Gastrocnemius medialis (tissue), 4 donors: ENCODE measurements at regions of chrX and their contacts with region 1.

Region 1: GRCh38 chrX:54182864-54183608 is at the start of gene FAM120C:
- DNase-seq: peak; percentile 37 to 61
- ATAC-seq: peak; percentile 85 to 90
- H3K4me3 ChIP-seq: peak within 1 kb of the TSS; percentile 69 to 75 (median 72)
- H3K27ac ChIP-seq: peak within 1 kb of the TSS; percentile 84 to 93 (median 88)
- H3K4me1 ChIP-seq: peaks cover 28 to 32% of the 10 kb centered on the region in 2 donors
- H3K27me3 ChIP-seq: no peaks in the 10 kb centered on the region
- CTCF ChIP-seq: no peak
- POLR2A ChIP-seq: no peak
- total RNA-seq, gene FAM120C: 4.7 to 12.8 (median 10.9) TPM

Region 2: DNA sequence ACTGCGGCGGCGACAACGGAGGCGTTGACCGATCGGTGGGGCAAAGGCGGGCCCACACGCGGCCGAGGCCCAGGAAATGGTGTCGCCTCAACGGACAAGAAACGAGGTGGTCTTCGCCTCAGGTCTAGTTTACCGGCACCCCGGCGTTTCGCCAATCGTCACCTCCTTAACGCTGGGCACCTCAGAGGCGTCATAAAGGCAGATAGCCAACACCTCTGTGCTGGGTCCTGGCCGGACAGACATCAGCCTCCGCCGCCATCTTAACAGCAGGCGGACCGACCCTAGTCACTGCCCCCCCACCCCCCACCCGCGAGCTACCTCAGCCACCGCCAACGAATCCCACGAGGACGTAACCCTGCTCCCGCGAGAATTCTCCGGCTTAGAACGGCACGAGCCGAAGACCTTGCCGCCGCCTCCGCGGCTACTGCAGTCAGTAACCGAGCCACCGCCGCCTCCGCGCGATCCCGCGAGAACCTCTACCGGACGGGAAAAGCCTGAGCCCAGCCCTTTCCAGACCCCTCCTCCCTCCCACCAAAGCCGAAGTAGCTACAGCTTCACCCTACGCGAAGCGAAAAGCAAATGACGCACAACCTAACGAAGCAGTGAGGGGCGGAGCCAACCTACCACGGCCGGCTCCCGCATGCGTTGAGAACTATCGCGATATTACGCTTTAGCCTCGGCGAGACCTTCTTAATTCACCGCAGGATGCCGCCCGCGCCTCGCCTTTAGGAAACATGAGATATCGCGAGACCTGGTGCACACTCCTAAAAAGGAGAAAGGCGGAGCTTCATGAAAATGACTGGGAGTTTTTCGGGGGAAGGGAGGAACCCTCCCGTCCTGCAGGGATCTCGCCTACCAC is 499.3 kb before region 1 on chrX:
- in situ Hi-C with region 1: no loop called
- intact Hi-C with region 1: loop called (anchors 5 kb)
- DNase-seq: peak; percentile 91 to 95
- ATAC-seq: peak; percentile 84 to 86
- H3K4me3 ChIP-seq: peak overlapping the region; percentile 58 to 86 (median 60)
- H3K27ac ChIP-seq: peak overlapping the region; percentile 83 to 95 (median 90)
- H3K4me1 ChIP-seq: peaks cover 2 to 26% of the 10 kb centered on the region in 2 donors
- H3K27me3 ChIP-seq: no peaks in the 10 kb centered on the region
- CTCF ChIP-seq: no peak
- POLR2A ChIP-seq: peak; percentile 74 to 79

Region 3: DNA sequence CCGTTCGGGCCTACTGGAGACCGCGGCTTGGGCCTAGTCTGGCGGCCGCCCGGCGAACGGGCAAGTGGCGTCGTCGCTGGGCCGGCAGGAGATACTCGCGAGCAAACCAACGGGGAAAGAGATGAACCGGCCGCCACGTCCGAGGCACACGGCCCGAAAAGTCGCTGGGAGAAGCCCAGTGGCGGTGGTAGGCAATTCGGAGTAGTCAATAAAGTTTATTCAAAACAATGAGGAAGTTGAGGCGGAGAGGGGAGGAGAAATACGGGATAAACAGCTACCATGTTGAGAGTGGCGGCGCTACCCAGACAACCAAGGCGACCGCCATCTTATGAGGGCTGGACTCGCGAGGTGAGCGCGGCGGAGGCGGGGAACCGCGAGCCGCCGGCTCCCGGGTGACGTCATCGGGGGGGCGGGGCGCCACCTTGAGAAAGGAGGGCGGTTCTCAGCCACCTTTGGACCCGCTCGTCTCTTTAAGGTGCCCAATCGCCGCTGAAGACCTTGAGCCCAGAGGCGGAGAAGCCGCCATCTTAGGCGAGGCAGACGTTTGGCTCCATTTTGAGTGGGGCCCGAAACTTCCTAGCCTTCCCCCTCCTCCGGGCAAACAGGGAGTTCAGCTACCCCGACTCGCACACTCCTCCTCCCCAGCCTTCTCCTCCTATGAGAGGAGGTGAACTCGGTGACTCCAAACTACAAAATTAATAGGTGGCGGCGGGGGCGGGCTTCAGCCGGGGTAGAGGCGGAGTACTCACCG is 138.7 kb before region 1 on chrX and contains the start of gene PHF8:
- in situ Hi-C with region 1: loop called in 1 of 4 experiments (anchors 10 kb)
- intact Hi-C with region 1: loop called (anchors 2 kb)
- DNase-seq: peak; percentile 87 to 95
- ATAC-seq: peak; percentile 91 to 95
- H3K4me3 ChIP-seq: peak within 1 kb of the TSS; percentile 70 to 96 (median 78)
- H3K27ac ChIP-seq: peak within 1 kb of the TSS; percentile 90 to 96 (median 94)
- H3K4me1 ChIP-seq: no peaks in the 10 kb centered on the region
- H3K27me3 ChIP-seq: no peaks in the 10 kb centered on the region
- CTCF ChIP-seq: no peak
- POLR2A ChIP-seq: peak; percentile 60 to 67
- total RNA-seq, gene PHF8: 7.2 to 22.5 (median 13.9) TPM

Region 4: GRCh38 chrX:54439967-54440871 is 257.2 kb after region 1 on chrX and contains the start of gene TSR2:
- in situ Hi-C with region 1: no loop called
- intact Hi-C with region 1: loop called (anchors 5 kb)
- DNase-seq: peak; percentile 63 to 76
- ATAC-seq: peak; percentile 96 to 97
- H3K4me3 ChIP-seq: peak within 1 kb of the TSS; percentile 74 to 95 (median 90)
- H3K27ac ChIP-seq: peak within 1 kb of the TSS; percentile 61 to 77 (median 63)
- H3K4me1 ChIP-seq: peaks cover 6 to 14% of the 10 kb centered on the region in 2 donors
- H3K27me3 ChIP-seq: no peaks in the 10 kb centered on the region
- CTCF ChIP-seq: no peak
- POLR2A ChIP-seq: peak in 1 of 2 donors; percentile 49
- total RNA-seq, gene TSR2: 10.1 to 24.2 (median 18.0) TPM

Region 5: GRCh38 chrX:54529552-54530357 is 346.7 kb after region 1 on chrX and contains the start of gene GNL3L:
- in situ Hi-C with region 1: loop called in 2 of 4 experiments (anchors 25 kb)
- intact Hi-C with region 1: no loop called
- DNase-seq: peak; percentile 78 to 87
- ATAC-seq: peak; percentile 91 to 92
- H3K4me3 ChIP-seq: peak within 1 kb of the TSS; percentile 64 to 84 (median 76)
- H3K27ac ChIP-seq: peak within 1 kb of the TSS; percentile 80 to 91 (median 84)
- H3K4me1 ChIP-seq: peaks cover 4 to 12% of the 10 kb centered on the region in 2 donors
- H3K27me3 ChIP-seq: no peaks in the 10 kb centered on the region
- CTCF ChIP-seq: no peak
- POLR2A ChIP-seq: peak; percentile 38 to 50
- total RNA-seq, gene GNL3L: 21.2 to 41.7 (median 34.9) TPM

Region 6: GRCh38 chrX:54808605-54809483 is 625.8 kb after region 1 on chrX:
- in situ Hi-C with region 1: no loop called
- intact Hi-C with region 1: loop called (anchors 2 kb)
- DNase-seq: peak; percentile 86 to 91
- ATAC-seq: peak; percentile 91 to 95
- H3K4me3 ChIP-seq: peak overlapping the region; percentile 71 to 94 (median 81)
- H3K27ac ChIP-seq: peak overlapping the region; percentile 87 to 90 (median 89)
- H3K4me1 ChIP-seq: peaks cover 0 to 6% of the 10 kb centered on the region in 2 donors
- H3K27me3 ChIP-seq: no peaks in the 10 kb centered on the region
- CTCF ChIP-seq: no peak
- POLR2A ChIP-seq: no peak

Region 7: GRCh38 chrX:55160685-55161552 is 977.9 kb after region 1 on chrX:
- in situ Hi-C with region 1: no loop called
- intact Hi-C with region 1: loop called (anchors 2 kb)
- DNase-seq: peak; percentile 81 to 87
- ATAC-seq: peak; percentile 96
- H3K4me3 ChIP-seq: peak overlapping the region; percentile 64 to 73 (median 68)
- H3K27ac ChIP-seq: peak overlapping the region; percentile 90 to 91 (median 91)
- H3K4me1 ChIP-seq: peaks cover 0 to 5% of the 10 kb centered on the region in 2 donors
- H3K27me3 ChIP-seq: no peaks in the 10 kb centered on the region
- CTCF ChIP-seq: peak; percentile 12 to 52 (median 41)
- POLR2A ChIP-seq: peak; percentile 76 to 83